T-cell (primary cell): ENCODE measurements at regions of chr15 and their contacts with region 1.

Region 1: DNA sequence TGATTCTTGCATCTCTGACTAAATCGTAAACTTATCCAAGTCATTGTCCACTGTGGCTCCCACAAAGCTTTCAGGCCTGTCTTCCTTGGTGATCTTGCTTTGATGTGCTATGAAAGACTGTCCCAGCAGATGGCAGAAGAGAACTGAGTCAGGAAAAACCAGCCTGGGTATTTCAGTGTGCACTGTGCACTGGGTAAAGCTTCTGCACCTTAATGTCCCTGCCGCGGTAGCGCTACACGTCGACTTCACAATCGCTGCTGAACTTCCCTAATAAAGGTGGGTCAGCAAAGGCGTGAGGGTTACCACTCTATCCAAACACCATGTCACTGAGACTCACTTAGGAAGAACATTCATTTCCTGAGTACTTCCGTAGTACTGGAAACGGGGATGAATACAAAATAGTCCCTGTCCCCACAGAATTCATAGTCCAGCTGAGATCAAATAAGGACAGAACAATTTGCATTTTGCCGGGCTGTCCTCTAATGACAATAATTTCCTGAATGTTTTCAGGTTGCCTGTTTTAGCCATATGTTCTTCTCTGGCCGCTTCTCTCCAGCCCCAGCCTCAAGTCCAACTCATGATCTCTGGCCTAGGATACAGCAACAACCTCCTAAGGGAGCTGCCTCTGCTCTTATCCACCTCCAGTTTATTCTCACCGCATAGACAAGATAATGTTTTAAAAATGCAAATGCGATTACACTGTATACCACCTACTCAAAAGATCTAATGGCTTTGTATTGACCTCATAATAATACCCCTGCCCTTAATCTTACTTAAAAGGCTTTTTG is 83.6 kb upstream of the AKAP13 start:
- DNase-seq: peak; percentile 29 to 83 (median 58)
- ATAC-seq: peak; percentile 92 to 99 (median 97)
- H3K4me3 ChIP-seq: peak overlapping the region in 1 of 2 donors; percentile 15
- H3K4me3 Mint-ChIP-seq: peak overlapping the region; percentile 49 to 59 (median 51)
- H3K27ac ChIP-seq: no peak overlapping the region
- H3K27ac Mint-ChIP-seq: peak overlapping the region; percentile 13 to 18
- H3K4me1 ChIP-seq: peaks cover 4 to 5% of the 10 kb centered on the region in 2 experiments
- H3K4me1 Mint-ChIP-seq: peaks cover 12 to 14% (median 12%) of the 10 kb centered on the region in 3 donors
- H3K27me3 ChIP-seq: peaks cover 0 to 7% of the 10 kb centered on the region in 2 experiments
- H3K27me3 Mint-ChIP-seq: peaks cover 0 to 6% of the 10 kb centered on the region in 2 donors

Region 2: GRCh38 chr15:85443593-85444087 is 146.8 kb after region 1 on chr15:
- CTCF ChIA-PET with region 1: interaction called in 1 of 2 experiments, 4 read pairs
- POLR2A ChIA-PET with region 1: interaction called in 1 of 2 experiments, 10 read pairs
- DNase-seq: peak in 4 of 35 experiments; percentile 2 to 53 (median 10)
- ATAC-seq: peak in 3 of 4 experiments; percentile 47 to 80 (median 70)
- H3K4me3 ChIP-seq: no peak overlapping the region
- H3K4me3 Mint-ChIP-seq: peak overlapping the region in 1 of 3 donors; percentile 14
- H3K27ac ChIP-seq: no peak overlapping the region
- H3K27ac Mint-ChIP-seq: peak overlapping the region; percentile 25 to 77
- H3K4me1 ChIP-seq: peaks cover 0 to 10% of the 10 kb centered on the region in 2 experiments
- H3K4me1 Mint-ChIP-seq: peaks cover 48 to 69% (median 59%) of the 10 kb centered on the region in 3 donors
- H3K27me3 ChIP-seq: no peaks in the 10 kb centered on the region
- H3K27me3 Mint-ChIP-seq: no peaks in the 10 kb centered on the region

Region 3: GRCh38 chr15:85463276-85463892 is 166.6 kb after region 1 on chr15:
- CTCF ChIA-PET with region 1: no interaction called
- POLR2A ChIA-PET with region 1: interaction called in 1 of 2 experiments, 11 read pairs
- DNase-seq: no peak
- ATAC-seq: peak in 2 of 4 experiments; percentile 33 to 56
- H3K4me3 ChIP-seq: no peak overlapping the region
- H3K4me3 Mint-ChIP-seq: no peak overlapping the region
- H3K27ac ChIP-seq: no peak overlapping the region
- H3K27ac Mint-ChIP-seq: peak overlapping the region; percentile 6 to 19
- H3K4me1 ChIP-seq: no peaks in the 10 kb centered on the region
- H3K4me1 Mint-ChIP-seq: peaks cover 65 to 70% (median 69%) of the 10 kb centered on the region in 3 donors
- H3K27me3 ChIP-seq: no peaks in the 10 kb centered on the region
- H3K27me3 Mint-ChIP-seq: no peaks in the 10 kb centered on the region

Region 4: GRCh38 chr15:85563328-85563727 is 266.5 kb after region 1 on chr15:
- CTCF ChIA-PET with region 1: no interaction called
- POLR2A ChIA-PET with region 1: no interaction called
- DNase-seq: no peak
- ATAC-seq: no peak
- H3K4me3 ChIP-seq: no peak overlapping the region
- H3K4me3 Mint-ChIP-seq: no peak overlapping the region
- H3K27ac ChIP-seq: no peak overlapping the region
- H3K27ac Mint-ChIP-seq: no peak overlapping the region
- H3K4me1 ChIP-seq: peaks cover 0 to 1% of the 10 kb centered on the region in 2 experiments
- H3K4me1 Mint-ChIP-seq: peaks cover 20 to 31% (median 28%) of the 10 kb centered on the region in 3 donors
- H3K27me3 ChIP-seq: no peaks in the 10 kb centered on the region
- H3K27me3 Mint-ChIP-seq: no peaks in the 10 kb centered on the region